ENCODE measurements at regions of chr13 and their contacts with region 1.

Region 1: GRCh38 chr13:41019011-41019487 is at the start of gene ELF1:
- DNase-seq: peak; percentile 59
- CTCF ChIP-seq: no peak

Region 2: DNA sequence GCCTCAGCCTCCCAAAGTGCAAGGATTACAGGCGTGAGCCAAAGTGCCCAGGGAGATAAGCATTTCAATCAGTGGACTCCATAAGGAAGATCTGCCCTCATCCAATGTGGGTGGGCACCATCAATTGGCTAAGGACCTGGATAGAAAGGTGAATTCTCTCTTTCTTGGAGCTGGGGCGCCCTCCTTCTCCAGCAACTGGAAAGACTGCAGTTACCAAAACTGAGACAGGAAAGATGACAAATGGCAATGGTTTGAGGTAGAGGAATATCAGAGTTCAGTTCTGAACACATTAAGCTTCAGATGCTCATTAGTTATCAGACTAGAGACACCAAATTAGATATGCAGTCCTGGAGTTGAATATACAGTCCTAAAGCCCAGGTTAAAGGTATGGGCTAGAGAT is 10.6 kb after region 1 on chr13:
- CTCF ChIA-PET with region 1: interaction called, 24 read pairs
- POLR2A ChIA-PET with region 1: no interaction called
- DNase-seq: no peak
- CTCF ChIP-seq: no peak

Measured in GM10248 (cell line).